Left colon (tissue), 2 donors: ENCODE measurements at regions of chr15 and their contacts with region 1.

Region 1: DNA sequence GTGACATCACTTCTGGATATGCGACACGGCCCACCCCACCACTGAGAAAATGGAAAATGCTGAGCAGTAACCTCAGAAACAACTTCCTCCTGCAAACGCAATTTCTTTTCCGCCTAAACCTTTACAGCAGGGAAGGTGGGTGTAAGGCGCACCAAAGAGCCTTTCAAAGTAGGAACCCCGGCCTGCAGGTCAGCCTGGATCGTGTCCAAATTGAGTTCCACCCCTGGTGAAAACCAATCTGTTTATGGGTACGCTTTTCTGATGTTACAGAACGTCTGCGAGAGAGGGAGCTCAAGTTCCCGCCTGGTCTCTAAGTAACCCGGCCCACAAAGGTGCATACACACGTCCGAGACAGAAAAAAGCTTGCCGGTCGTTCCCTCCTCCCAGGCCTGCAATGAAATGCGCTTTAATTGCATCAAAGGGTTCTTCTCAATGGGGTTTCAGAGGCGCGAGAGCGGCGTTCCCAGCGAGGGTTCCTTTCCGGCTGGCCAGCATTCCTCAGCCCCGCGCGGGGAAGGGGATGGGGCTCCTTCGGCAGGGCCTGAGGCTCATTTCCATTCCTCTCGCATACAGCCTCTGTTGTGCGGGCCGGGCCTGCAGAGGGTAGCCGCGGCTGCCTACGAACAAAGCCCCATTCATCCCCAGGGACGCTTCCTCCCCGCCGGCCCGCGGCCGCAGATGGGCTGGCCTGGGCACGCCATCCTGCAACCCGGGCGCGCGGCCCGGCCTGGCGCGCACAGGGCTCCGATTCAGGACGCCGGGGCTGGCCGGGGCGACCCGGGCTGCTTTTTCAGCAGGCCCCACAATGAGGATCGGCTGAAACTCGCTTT is 138.1 kb downstream of the TMCO5A start:
- DNase-seq: peak; percentile 73 to 78
- ATAC-seq: peak; percentile 70

Region 2: DNA sequence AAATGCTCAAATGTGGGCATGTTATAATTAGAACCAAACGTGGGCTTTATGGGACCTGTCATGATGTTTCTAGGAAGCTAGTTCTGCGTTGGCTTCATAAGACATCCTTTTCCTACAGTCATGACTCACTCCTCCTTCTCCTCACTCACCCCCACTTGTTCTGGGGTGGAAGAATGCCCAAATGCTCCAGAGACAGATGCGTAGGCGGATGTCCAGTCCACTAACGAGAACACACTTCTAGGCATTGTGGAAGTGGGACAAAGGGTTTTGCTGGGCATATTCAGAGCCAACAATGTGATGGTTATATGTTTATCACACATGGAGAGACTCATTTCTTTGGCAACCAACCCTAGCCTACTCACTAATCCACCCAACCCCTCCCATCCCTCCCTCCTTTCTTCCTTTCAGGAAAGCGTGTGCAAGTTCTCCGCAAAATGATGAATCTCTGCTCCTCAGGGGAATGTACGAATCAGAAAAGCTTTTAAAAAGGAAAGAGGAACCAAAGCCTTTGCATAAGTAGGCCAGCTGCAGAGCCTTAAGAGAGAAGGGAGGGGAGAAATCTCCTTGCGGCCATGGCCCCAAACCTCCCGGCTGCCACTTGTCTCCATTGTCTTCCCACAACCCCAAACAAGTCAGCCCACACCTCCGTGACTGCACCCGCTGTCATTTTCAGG is 57.1 kb after region 1 on chr15:
- intact Hi-C with region 1: loop called in 1 of 2 experiments (anchors 5 kb)
- DNase-seq: peak; percentile 39 to 72
- ATAC-seq: no peak

Region 3: DNA sequence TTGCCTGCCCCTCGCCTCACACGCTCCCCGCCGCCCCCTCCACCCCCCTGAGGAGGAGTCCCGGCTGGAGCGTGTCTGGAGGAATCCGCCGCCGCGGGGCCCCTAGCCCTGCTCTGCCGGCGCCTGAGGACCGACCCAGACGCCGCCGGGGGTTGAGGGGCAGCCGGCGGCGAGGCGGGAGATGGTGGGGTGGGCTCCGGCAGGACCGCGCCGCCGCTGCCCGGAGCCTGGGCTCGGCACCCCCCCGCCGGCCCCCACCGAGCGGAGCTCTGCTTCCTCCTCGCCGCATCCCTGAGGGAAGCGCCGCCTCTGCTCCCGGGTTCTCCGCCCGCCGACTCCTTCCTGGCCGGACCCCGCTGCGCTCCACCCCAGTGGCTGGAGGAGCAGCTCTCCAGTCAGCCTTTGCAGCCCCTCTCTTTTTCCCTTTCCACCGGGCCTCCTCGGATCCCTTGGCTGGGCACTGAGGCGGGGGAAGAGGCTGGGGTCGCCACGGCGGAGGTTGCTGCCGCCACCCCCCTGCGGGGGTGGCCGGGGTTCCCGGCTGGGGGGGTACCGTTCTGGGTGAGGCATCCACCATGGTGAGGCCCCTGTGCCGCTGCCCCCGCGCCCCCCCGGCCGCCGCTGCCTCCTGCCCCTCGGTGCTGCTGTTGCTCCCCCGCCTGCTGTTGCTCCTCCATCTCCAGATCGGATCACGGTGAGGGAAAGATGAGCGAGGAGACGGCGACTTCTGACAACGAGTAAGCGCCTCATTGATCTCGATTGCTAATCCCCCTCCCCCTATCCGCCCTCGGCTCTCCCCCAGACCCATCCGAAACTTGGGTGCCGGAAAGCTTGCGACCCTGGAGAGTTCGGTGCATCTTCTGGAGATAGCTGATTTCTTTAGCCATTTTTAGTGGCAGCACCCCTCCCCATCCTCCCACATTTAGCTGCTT is 180.2 kb after region 1 on chr15 and contains the start of gene SPRED1:
- intact Hi-C with region 1: loop called in 1 of 2 experiments (anchors 10 kb)
- DNase-seq: peak; percentile 71 to 82
- ATAC-seq: peak; percentile 69
- total RNA-seq, gene SPRED1: 24.5 to 32.4 TPM